PC-3 (cell line): ENCODE measurements at regions of chr21 and their contacts with region 1.

Region 1: GRCh38 chr21:34881894-34882371 is 167.2 kb downstream of the RUNX1 start:
- DNase-seq: peak; percentile 96
- ATAC-seq: peak; percentile 40
- H3K4me3 ChIP-seq: peak overlapping the region; percentile 95
- H3K27ac ChIP-seq: peak overlapping the region; percentile 97
- H3K4me1 ChIP-seq: peaks cover 66% of the 10 kb centered on the region
- H3K27me3 ChIP-seq: no peaks in the 10 kb centered on the region
- CTCF ChIP-seq: no peak

Region 2: GRCh38 chr21:34745557-34746255 is 136.2 kb before region 1 on chr21:
- CTCF ChIA-PET with region 1: interaction called, 7 read pairs
- POLR2A ChIA-PET with region 1: interaction called, 5 read pairs
- intact Hi-C with region 1: loop called (anchors 2 kb)
- DNase-seq: peak; percentile 93
- ATAC-seq: peak; percentile 68
- H3K4me3 ChIP-seq: no peak overlapping the region
- H3K27ac ChIP-seq: no peak overlapping the region
- H3K4me1 ChIP-seq: peaks cover 31% of the 10 kb centered on the region
- H3K27me3 ChIP-seq: no peaks in the 10 kb centered on the region
- CTCF ChIP-seq: peak; percentile 97

Region 3: DNA sequence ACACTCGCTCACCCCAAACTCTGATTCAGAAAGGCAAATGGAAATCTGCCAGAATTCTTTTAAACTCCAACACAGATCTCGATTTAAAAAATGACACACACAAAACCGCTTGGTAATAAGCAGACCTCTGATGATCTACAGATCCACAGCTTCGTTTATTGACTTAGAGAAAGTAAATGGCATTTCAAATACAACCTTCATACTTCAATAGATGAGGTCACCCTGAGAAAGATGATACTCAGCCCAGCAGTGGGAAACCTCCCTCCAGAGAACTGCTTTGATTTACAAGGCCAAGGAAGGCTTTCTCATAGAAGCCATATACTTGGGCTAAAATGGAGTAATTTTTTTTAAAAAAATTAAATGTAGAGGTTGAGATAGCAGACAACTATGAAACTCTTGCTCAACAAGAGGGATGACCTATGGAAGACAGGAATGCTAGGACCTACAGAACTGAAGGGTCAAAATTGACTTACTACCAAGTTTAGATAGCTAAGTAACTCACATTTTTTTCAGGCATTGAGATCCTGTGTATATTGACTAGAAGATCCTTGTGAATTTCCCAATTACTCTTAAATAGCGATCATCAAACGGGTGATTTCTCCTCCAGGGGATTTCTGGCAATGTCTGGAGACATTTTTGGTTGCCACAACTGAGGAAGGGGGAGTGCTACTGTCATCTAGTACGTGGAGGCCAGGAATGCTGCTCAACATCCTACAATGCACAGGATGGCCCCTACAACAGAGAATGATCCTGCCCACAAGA is 69.2 kb before region 1 on chr21:
- CTCF ChIA-PET with region 1: no interaction called
- POLR2A ChIA-PET with region 1: interaction called, 3 read pairs
- intact Hi-C with region 1: loop called (anchors 2 kb)
- DNase-seq: peak; percentile 93
- ATAC-seq: peak; percentile 53
- H3K4me3 ChIP-seq: no peak overlapping the region
- H3K27ac ChIP-seq: peak overlapping the region; percentile 96
- H3K4me1 ChIP-seq: peaks cover 80% of the 10 kb centered on the region
- H3K27me3 ChIP-seq: no peaks in the 10 kb centered on the region
- CTCF ChIP-seq: no peak

Region 4: DNA sequence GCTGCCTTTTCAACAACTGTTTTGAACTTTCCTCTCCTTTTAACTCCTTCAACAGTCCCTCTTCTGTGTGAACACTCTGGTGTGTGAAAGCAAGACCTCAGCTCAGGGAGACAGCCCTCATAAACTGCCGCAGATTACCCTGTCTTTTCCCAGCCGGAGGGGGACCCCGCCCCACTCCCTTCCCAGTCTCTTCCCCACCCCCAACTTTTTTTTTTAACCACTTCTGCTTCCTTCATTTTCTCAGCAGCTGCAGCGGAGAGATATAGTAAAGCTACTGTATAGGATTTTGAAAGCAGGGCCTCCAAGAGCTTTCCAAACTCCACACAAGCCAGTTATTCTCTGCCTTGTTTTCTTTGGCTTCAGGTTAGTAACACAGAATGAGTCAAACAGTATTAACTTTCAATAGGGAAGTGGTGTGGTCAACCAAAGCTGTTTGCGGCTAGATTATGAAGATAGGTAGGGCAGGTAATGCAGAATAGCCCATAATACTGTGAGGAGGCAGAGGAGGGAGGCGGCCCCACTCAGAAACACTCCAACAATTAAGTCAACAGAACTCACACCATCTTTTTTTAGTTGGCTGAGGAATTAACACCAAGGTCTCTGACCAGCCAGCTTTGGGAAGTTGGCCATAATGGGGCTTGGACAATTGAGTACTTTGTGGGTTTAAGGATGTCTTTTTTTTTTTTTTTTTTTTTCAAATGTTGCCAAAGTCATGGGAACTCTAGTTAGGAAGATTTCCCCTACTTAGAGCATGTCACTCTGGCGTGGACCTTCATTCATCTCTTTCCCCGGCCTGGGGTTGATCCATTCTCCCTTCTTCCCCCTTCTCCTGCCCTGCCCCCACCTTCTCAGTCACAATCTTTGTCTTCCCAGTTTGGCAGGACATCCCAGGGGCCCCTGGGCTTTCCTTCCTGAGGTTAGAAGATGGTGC is 36.1 kb before region 1 on chr21:
- CTCF ChIA-PET with region 1: interaction called, 3 read pairs
- POLR2A ChIA-PET with region 1: interaction called, 13 read pairs
- intact Hi-C with region 1: loop called (anchors 1 kb)
- DNase-seq: peak; percentile 95
- ATAC-seq: peak; percentile 85
- H3K4me3 ChIP-seq: peak overlapping the region; percentile 30; the same call in 1 of the 2 replicates
- H3K27ac ChIP-seq: peak overlapping the region; percentile 85
- H3K4me1 ChIP-seq: peaks cover 36% of the 10 kb centered on the region
- H3K27me3 ChIP-seq: no peaks in the 10 kb centered on the region
- CTCF ChIP-seq: no peak